Motor neuron (in vitro differentiated cells): ENCODE measurements at regions of chr19 and their contacts with region 1.

Region 1: DNA sequence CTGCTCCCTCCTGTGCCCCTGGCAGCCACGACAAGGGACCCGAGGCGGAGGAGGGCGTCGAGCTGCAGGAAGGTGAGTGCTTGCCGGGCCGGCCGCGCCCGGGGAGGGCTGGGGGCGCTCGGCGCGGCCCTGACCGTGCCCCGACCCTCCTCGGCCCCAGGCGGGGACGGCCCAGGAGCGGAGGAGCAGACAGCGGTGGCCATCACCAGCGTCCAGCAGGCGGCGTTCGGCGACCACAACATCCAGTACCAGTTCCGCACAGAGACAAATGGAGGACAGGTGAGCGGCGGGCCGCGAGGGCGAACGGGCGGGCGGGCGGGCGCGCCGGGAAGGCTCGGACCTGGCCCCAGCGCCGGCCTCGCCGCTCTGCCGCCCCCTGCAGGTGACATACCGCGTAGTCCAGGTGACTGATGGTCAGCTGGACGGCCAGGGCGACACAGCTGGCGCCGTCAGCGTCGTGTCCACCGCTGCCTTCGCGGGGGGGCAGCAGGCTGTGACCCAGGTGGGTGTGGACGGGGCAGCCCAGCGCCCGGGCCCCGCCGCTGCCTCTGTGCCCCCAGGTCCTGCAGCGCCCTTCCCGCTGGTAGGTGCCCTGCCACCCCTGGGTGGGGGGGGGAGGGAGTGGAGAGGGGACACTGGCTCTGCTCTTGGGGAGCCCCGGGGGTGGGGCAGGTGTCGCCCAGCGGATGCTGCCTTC is 807 bp downstream of the USF2 start:
- ATAC-seq: peak; percentile 49 to 84 (median 80)
- H3K4me3 ChIP-seq: peak overlapping the region; percentile 76 to 100 (median 79)
- H3K27ac ChIP-seq: peak overlapping the region; percentile 97 to 98
- H3K4me1 ChIP-seq: peaks cover 8 to 10% of the 10 kb centered on the region in 2 donors

Region 2: DNA sequence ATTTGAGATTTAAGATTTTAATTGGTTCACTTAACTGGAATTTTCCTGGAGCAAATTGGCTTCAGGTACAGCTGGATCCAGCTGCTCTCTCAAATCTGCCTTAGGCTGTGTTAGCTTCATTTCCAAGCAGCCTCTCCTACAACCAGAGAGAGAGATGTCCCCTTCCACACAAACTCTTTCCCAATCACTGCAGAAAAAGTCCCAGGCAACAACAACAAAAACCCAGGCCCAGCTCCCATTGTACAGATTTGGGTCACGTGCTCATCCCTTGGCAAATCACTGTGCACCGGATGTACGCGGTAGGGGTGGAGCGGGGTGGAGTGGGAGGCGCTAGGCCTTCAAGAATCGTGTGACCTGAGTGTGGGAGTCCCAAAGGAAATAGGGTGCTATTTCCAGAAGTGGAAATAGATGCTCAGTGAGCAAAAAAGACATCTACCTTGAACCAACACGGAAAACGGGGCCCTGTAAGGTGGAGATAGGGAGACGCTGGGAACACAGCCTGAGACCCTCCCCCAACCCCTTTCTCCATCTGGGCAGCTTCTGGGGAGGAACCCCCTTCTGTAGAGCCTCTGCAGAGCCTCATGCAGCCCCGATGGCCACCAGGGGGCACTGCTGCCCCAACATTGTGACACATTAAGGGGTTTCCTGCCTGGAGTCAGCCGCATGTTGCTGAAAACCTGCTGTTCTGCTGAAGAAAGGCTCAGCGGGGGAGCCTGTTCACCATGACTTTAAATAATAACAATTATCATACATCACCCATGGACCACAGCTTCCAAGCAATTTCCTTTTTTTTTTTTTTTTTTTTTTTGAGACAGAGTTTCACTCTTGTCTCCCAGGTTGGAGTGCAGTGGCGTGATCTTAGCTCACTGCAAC is 202.6 kb before region 1 on chr19:
- in situ Hi-C with region 1: loop called in 1 of 9 experiments (anchors 25 kb)
- ATAC-seq: peak; percentile 59 to 96 (median 71)
- H3K4me3 ChIP-seq: no peak overlapping the region
- H3K27ac ChIP-seq: no peak overlapping the region
- H3K4me1 ChIP-seq: peaks cover 0 to 6% of the 10 kb centered on the region in 2 donors

Region 3: DNA sequence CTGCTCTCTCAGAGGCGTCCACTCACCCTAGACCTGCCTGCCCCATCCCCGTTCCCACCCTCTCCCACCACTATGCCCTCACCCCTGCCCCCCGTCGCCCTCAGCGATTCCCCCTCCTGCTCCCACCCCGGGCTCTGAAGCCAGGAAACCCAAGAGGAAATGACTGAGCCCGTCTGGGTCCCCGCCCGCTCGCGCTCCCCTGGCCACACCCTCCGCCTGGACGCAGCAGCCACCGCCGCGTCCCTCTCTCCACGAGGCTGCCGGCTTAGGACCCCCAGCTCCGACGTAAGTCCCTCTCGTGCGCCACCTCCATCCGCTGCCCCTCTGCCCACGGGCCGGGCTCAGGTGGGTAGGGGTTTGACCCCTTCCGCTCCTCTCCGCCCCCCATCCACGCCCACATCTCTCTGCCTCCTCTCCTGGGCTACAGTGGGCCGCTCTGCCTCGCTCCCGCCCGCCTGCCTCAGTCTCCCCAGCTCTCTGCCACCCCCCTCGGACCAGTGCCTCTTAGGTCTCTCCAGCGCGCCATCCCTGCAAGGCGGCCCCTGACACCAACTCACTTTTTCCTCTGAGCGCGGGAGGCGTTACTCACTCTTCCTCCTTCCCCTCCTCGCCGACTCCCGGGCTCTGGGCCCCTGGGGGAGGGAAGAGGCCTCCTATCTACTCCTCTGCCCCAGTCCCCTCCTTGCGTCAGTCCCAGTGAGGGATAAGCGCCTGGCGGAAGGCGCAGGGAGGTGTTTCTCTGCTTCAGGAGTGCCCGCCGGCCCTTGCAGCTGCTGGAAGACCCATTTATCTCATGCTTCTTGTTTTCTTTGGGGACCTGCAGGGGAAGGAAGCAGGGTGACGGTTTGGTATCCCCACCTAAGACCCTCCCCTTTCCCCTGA is 114.8 kb before region 1 on chr19 and contains the start of gene FXYD5:
- in situ Hi-C with region 1: loop called in 1 of 9 experiments (anchors 25 kb)
- ATAC-seq: peak; percentile 69 to 88 (median 82)
- H3K4me3 ChIP-seq: peak within 1 kb of the TSS; percentile 9 to 43 (median 29)
- H3K27ac ChIP-seq: peak within 1 kb of the TSS in 1 of 2 donors; percentile 0
- H3K4me1 ChIP-seq: peaks cover 21 to 23% of the 10 kb centered on the region in 2 donors
- total RNA-seq, gene FXYD5: 7.1 to 201 (median 14.7) TPM